BJ (cell line): ENCODE measurements at regions of chr9 and their contacts with region 1.

Region 1: DNA sequence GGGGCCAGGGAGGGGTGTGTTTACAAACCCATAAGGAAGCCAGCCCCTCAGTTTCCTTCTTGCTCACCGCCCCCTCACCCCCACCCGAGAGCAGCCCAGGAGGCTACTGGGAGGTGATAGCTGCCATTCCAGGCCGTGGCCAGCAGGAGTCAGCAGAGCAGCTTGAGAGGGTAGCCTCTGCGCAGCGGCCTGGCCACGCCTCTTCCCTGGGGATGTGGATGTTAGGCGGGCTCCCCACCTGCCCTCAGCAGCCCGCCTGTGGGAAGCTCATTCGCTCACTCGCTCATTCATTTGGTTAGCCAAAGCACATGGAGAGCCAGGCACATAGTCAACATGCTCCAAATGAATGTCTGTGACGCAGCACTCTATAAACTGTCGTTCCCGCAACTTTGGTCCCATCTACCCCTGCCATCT is 6.1 kb upstream of the DPM2 start:
- DNase-seq: no peak
- H3K4me3 ChIP-seq: no peak overlapping the region
- H3K27me3 ChIP-seq: no peaks in the 10 kb centered on the region
- CTCF ChIP-seq: peak; percentile 98

Region 2: GRCh38 chr9:127847155-127847463 is 96.6 kb before region 1 on chr9:
- CTCF ChIA-PET with region 1: no interaction called
- POLR2A ChIA-PET with region 1: no interaction called
- DNase-seq: no peak
- H3K4me3 ChIP-seq: no peak overlapping the region
- H3K27me3 ChIP-seq: no peaks in the 10 kb centered on the region
- CTCF ChIP-seq: no peak

Region 3: GRCh38 chr9:127887792-127888191 is 55.9 kb before region 1 on chr9:
- CTCF ChIA-PET with region 1: no interaction called
- POLR2A ChIA-PET with region 1: no interaction called
- DNase-seq: no peak
- H3K4me3 ChIP-seq: no peak overlapping the region
- H3K27me3 ChIP-seq: no peaks in the 10 kb centered on the region
- CTCF ChIP-seq: 0 out of 2 replicates have a peak, but pooled peaks have one; percentile 2

Region 4: DNA sequence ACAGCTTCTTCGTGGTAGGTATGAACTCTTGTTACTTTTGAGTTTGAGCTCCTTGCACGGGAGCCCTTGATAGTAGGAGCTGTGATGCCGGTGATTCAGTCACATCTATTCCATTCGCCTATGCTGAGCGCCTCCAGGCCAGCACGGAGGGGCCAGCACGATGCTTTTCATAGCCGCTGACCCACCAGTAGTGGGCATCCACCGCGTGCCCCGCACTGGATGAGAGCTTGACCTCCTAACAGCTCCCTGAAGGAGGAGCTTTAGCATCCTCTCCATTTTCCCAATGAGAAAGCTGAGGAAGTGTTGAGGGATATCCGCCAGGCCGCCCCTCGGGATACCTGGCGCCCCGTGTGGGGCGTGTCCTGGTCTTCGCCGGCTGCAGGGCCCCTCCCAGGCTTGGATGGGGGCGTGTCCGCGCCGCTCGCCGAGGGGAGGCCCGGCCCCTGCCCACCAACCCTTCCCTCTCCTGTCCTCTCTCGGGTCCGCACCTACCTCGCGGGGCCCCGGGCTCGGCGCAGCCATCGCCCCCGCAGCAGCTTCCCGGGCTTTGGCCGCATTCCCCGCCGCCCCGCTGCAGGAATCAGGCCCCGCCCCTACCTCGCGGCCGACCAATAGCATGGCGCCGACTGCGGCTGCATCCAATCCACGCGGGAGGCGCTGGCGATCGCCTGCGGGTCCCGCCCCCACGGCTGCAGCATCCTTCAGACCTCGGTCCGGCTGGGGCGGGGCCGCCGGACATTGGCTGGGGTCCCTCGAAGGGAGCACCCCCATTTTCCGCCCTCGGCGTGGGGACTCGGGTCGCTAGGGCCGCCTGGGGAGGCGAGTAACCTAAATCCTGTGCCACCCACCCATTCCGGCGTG is 13.3 kb before region 1 on chr9 and contains the start of gene PIP5KL1:
- CTCF ChIA-PET with region 1: interaction called, 15 read pairs
- POLR2A ChIA-PET with region 1: no interaction called
- DNase-seq: no peak
- H3K4me3 ChIP-seq: peak within 1 kb of the TSS; percentile 52
- H3K27me3 ChIP-seq: no peaks in the 10 kb centered on the region
- CTCF ChIP-seq: peak; percentile 42
- polyA plus RNA-seq, gene PIP5KL1: 1.9 and 2.3 TPM in 2 replicates

Region 5: GRCh38 chr9:127963359-127964064 is 19.8 kb after region 1 on chr9:
- CTCF ChIA-PET with region 1: interaction called, 56 read pairs
- POLR2A ChIA-PET with region 1: no interaction called
- DNase-seq: no peak
- H3K4me3 ChIP-seq: no peak overlapping the region
- H3K27me3 ChIP-seq: no peaks in the 10 kb centered on the region
- CTCF ChIP-seq: no peak

Region 6: DNA sequence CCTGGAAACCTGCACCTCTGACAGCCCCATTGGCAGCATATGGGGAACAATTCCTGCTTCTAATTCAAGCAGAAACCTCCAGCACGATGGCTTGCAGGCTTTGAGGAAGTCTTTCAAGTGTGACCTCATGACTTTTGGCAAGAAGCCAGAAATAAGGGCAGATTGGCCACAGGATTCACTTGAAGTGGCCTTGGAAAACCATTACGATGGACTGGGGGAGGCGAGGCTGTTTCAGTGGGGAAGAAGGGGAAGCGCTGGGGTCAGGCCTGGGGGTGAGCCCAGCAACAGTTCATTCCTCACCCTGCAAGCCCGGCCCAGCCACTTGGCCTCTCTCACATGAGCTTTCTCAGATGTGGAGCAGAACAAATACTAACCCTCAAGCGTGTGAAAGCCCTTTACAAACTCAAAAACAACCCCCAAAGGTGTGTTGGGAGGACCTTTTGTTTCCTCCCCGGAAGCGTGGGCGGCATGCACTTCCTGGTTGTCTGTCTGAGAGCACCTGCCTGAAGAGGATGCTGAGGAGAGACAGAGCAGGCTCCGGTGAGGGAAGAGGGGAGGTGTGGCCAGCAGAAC is 63.9 kb after region 1 on chr9:
- CTCF ChIA-PET with region 1: interaction called, 12 read pairs
- POLR2A ChIA-PET with region 1: no interaction called
- DNase-seq: no peak
- H3K4me3 ChIP-seq: no peak overlapping the region
- H3K27me3 ChIP-seq: no peaks in the 10 kb centered on the region
- CTCF ChIP-seq: no peak

Region 7: GRCh38 chr9:128051932-128052709 is 108.4 kb after region 1 on chr9:
- CTCF ChIA-PET with region 1: interaction called, 12 read pairs
- POLR2A ChIA-PET with region 1: no interaction called
- DNase-seq: no peak
- H3K4me3 ChIP-seq: no peak overlapping the region
- H3K27me3 ChIP-seq: no peaks in the 10 kb centered on the region
- CTCF ChIP-seq: no peak

Region 8: GRCh38 chr9:128094166-128094967 is 150.6 kb after region 1 on chr9:
- CTCF ChIA-PET with region 1: interaction called, 15 read pairs
- POLR2A ChIA-PET with region 1: no interaction called
- DNase-seq: peak; percentile 91
- H3K4me3 ChIP-seq: peak overlapping the region; percentile 10
- H3K27me3 ChIP-seq: no peaks in the 10 kb centered on the region
- CTCF ChIP-seq: no peak

Region 9: DNA sequence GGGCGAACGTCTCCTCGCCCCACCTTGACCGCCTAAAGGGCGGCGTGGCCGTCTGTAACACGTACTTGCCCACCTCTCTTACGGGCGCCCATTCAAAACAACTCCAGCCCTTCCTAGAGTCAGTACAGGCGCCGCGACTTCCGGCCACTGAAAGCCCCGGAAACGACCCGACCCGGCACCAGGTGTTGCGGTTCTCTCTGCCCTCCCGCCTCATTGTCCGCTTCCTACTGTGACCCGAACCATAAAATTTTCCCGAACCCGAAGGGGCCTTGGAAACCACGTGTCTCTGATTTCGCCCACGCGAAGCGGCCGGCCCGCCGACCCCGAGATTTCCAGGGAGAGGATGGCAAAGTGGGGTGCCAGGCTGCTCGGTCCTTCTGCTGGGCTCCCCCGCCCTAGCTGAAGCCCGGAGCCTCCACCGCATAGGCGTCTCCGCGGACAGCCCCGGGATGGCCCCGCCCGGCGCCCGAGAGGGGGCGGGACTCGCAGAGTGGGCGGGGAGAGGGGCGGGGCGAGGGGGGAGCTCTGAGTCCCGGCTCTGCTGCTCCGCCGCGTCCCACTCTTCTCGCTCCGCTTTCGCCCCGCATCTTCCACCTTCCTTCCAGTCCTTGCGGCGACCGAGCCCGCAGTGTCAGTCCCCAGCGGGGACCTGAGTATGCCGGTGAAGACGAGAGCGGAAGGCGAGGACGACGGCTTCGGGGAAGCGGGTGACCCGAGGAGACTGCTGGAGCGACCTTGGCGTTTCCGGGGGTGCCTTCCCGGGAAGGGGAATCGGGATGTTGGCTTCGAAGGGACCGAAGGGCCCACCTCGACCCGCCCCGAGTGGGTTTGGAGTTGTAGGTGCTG is 184.5 kb after region 1 on chr9:
- CTCF ChIA-PET with region 1: interaction called, 13 read pairs
- POLR2A ChIA-PET with region 1: no interaction called
- DNase-seq: peak; percentile 38
- H3K4me3 ChIP-seq: peak overlapping the region; percentile 90
- H3K27me3 ChIP-seq: peaks cover 8% of the 10 kb centered on the region
- CTCF ChIP-seq: no peak